ENCODE measurements at regions of chr14 and their contacts with region 1.

Region 1: DNA sequence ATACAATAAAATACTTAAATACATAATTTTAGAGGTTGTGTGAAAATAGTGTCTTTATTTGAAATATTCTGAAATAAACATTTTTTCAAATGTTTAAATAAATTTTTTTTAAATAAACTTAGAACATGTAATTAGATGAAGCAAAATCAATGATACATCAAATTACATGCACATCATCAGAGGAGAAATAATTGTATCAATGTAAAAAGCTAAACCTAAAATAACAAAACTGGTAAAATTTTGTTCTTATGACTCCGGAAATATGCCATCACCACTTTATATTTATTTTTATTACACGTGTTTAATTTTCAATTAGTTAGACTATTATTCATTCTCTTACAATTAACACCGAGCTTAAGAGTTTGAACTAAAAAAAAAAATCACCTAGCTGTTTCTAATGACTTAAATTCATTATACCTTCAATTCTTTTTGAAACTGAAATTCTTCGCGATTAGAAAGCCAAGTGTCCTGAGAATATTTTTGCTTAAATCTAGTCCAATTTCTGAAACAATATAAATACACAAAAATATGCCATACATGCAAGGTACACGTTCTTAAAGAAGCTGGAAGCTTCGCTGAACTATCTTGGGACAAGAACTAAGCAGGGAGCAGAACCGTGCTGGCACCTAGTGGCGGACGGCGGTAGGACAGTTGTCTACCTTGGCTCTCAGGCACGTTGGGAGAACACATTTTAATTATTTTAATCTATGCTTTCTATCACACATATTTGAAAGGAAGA is 230.5 kb downstream of the SLC25A21 start:
- DNase-seq: no peak
- ATAC-seq: peak; percentile 85
- H3K4me3 ChIP-seq: no peak overlapping the region
- H3K27ac ChIP-seq: no peak overlapping the region
- H3K4me1 ChIP-seq: no peaks in the 10 kb centered on the region
- H3K27me3 ChIP-seq: no peaks in the 10 kb centered on the region
- CTCF ChIP-seq: peak; percentile 91 to 98 (median 95)
- EP300 ChIP-seq: no peak
- POLR2A ChIP-seq: no peak
- RAD21 ChIP-seq: peak; percentile 95

Region 2: GRCh38 chr14:36070031-36070719 is 871.8 kb before region 1 on chr14:
- CTCF ChIA-PET with region 1: interaction called, 11 read pairs
- POLR2A ChIA-PET with region 1: no interaction called
- RAD21 ChIA-PET with region 1: interaction called, 5 read pairs
- SMC1A ChIA-PET with region 1: interaction called, 8 read pairs
- in situ Hi-C with region 1: no loop called
- intact Hi-C with region 1: no loop called
- DNase-seq: no peak
- ATAC-seq: peak; percentile 92
- H3K4me3 ChIP-seq: no peak overlapping the region
- H3K27ac ChIP-seq: no peak overlapping the region
- H3K4me1 ChIP-seq: no peaks in the 10 kb centered on the region
- H3K27me3 ChIP-seq: no peaks in the 10 kb centered on the region
- CTCF ChIP-seq: peak; percentile 72 to 88 (median 80)
- EP300 ChIP-seq: no peak
- POLR2A ChIP-seq: no peak
- RAD21 ChIP-seq: peak; percentile 88

Region 3: DNA sequence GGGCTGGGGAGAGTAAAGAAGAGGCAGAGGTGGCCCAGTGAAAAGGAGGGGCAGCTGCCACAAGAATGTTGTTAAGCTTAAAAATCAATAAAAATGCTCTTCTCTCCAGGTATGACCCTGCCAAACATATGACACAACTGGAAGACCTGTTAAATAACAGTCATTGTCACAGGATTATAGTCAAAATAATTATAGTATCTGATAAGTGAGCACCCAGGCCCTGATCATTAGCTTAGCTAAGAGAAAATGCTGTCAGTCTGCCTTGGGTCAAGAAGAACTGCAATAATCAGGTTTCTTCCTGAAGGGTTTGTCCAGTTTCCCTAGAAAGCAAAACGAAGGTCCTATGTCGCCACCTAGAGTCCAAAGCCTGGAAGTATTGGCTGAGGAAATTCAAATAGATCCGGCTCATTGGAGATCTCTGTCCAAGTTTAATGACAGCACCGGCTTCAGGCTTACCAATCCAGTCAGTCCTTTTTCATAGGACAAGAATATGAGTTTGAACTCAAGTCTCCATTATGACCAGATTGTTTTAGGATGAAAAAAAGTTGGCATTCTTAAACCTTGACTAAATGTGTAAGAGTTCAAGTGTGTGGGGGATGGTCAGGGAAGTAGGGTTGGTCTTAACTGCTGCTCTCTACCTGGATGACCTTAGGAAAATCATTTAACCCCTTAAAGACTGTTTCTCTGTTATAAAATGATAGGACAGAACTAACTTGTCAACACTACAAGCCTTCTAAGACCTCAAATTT is 337.0 kb before region 1 on chr14:
- CTCF ChIA-PET with region 1: interaction called, 13 read pairs
- POLR2A ChIA-PET with region 1: no interaction called
- RAD21 ChIA-PET with region 1: interaction called, 7 read pairs
- SMC1A ChIA-PET with region 1: interaction called, 4 read pairs
- in situ Hi-C with region 1: no loop called
- intact Hi-C with region 1: loop called (anchors 1 kb)
- DNase-seq: no peak
- ATAC-seq: peak; percentile 82
- H3K4me3 ChIP-seq: no peak overlapping the region
- H3K27ac ChIP-seq: no peak overlapping the region
- H3K4me1 ChIP-seq: no peaks in the 10 kb centered on the region
- H3K27me3 ChIP-seq: no peaks in the 10 kb centered on the region
- CTCF ChIP-seq: peak; percentile 80 to 82 (median 80)
- EP300 ChIP-seq: no peak
- POLR2A ChIP-seq: no peak
- RAD21 ChIP-seq: peak; percentile 86

Region 4: DNA sequence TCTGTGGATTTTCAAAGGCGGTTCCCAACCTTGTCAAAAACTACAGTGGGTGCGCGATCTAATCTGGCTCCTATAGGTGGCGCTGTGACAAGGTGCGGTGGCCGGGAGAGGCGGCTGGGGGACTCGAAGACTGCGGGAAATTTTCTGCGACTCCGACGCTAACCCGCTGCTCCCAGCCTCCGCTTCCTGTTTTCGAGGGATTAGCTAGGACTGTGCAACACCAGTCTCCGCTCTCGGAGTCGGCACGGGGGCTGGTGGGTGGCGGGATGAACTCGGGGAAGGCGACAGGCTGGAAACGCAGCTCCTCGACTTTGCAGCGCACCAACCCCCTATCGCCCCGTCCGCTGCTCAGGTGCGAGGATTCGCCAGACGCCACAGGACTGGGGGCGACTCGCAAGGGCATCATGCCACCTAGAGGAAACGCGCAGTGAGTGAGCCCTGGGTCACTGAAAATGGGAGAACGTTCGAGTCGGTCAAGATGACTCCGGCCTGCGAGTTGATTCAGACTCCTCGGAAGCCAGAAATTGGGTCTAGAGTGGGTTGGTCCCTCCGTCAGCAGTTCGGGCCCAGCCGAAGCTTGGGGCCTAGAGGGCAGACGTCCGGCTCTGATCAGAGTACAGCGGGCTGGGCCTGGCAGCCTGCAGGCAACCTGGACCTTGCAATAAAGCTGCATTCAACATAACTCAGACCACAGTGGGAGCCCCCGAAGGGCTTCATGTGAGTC is 285.8 kb before region 1 on chr14:
- CTCF ChIA-PET with region 1: interaction called, 29 read pairs
- POLR2A ChIA-PET with region 1: no interaction called
- RAD21 ChIA-PET with region 1: interaction called, 13 read pairs
- SMC1A ChIA-PET with region 1: interaction called, 9 read pairs
- in situ Hi-C with region 1: loop called (anchors 10 kb)
- intact Hi-C with region 1: loop called (anchors 2 kb)
- DNase-seq: no peak
- ATAC-seq: peak; percentile 68
- H3K4me3 ChIP-seq: no peak overlapping the region
- H3K27ac ChIP-seq: no peak overlapping the region
- H3K4me1 ChIP-seq: no peaks in the 10 kb centered on the region
- H3K27me3 ChIP-seq: peaks cover 5 to 13% of the 10 kb centered on the region in 2 experiments; a peak in 3 of 4 replicates
- CTCF ChIP-seq: peak; percentile 17 to 38 (median 25); a peak in 1 of 6 replicates
- EP300 ChIP-seq: no peak
- POLR2A ChIP-seq: no peak
- RAD21 ChIP-seq: no peak

Region 5: DNA sequence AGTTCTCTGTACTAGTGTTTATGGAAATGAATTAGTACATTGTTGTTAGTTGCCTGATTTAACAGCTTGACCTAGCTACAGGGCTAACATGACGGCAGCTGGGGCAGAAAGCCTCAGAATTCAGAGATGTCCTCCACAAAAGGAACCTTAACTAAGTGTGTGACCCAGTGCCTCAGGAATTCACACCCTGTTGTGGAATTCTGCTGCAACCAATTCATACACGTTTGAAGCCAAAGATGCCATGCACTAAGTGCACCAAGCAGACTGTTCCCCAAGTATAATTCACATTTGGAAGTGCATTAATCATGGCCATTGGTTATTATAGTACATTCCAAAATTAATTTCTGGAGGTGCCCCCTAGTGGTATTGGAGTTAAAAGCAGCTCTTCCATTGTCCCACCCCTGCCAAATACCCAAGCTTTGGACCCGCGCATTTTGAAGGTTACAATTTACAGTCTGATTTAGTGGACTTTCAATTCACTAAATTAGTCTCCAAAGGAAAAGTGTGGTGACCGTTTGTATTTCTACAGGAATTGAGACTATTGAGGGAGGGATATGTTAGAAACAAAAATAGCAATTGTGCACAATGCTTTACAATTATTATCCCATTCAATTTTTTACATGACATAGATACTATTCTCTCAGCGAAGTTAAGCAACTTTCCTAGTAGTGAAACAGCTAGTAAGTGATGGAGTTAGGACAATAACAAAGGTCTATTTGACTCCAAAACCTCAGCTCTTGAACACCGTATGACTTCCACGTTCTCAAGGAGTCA is 194.4 kb before region 1 on chr14:
- CTCF ChIA-PET with region 1: interaction called, 14 read pairs
- POLR2A ChIA-PET with region 1: no interaction called
- RAD21 ChIA-PET with region 1: interaction called, 14 read pairs
- SMC1A ChIA-PET with region 1: interaction called, 6 read pairs
- in situ Hi-C with region 1: no loop called
- intact Hi-C with region 1: no loop called
- DNase-seq: no peak
- ATAC-seq: no peak
- H3K4me3 ChIP-seq: no peak overlapping the region
- H3K27ac ChIP-seq: no peak overlapping the region
- H3K4me1 ChIP-seq: no peaks in the 10 kb centered on the region
- H3K27me3 ChIP-seq: no peaks in the 10 kb centered on the region
- CTCF ChIP-seq: peak; percentile 28 to 48 (median 32); a peak in 4 of 6 replicates
- EP300 ChIP-seq: no peak
- POLR2A ChIP-seq: no peak
- RAD21 ChIP-seq: no peak

Region 6: GRCh38 chr14:36866867-36867266 is 75.1 kb before region 1 on chr14:
- CTCF ChIA-PET with region 1: interaction called, 10 read pairs
- POLR2A ChIA-PET with region 1: no interaction called
- RAD21 ChIA-PET with region 1: interaction called, 4 read pairs
- SMC1A ChIA-PET with region 1: interaction called, 4 read pairs
- in situ Hi-C with region 1: no loop called
- intact Hi-C with region 1: no loop called
- DNase-seq: peak; percentile 38
- ATAC-seq: peak; percentile 91
- H3K4me3 ChIP-seq: no peak overlapping the region
- H3K27ac ChIP-seq: no peak overlapping the region; the same call in 1 of the 2 replicates
- H3K4me1 ChIP-seq: peaks cover 11% of the 10 kb centered on the region
- H3K27me3 ChIP-seq: no peaks in the 10 kb centered on the region
- CTCF ChIP-seq: no peak
- EP300 ChIP-seq: peak in 1 of 2 experiments; percentile 57; a peak in 2 of 4 replicates
- POLR2A ChIP-seq: no peak
- RAD21 ChIP-seq: no peak

Region 7: DNA sequence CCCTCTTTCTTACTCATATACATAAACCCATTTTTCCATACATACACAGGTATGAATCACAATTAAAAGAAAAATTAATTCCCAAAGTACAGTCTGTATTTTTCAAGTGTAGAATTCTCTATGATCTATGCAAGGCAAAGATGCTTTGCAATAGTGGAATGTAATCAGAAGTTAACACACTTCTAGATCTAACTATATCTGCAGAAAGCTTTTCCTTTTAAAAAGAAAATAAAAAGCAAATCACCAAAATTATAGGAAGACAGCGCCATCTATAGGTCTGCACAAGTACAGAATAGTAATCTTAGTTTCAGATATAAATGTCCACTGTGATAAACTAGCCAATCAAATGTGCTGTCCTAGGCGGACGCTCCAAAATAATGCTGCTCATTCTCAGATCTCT is 208.5 kb after region 1 on chr14:
- CTCF ChIA-PET with region 1: interaction called, 10 read pairs
- POLR2A ChIA-PET with region 1: no interaction called
- RAD21 ChIA-PET with region 1: interaction called, 6 read pairs
- SMC1A ChIA-PET with region 1: interaction called, 3 read pairs
- in situ Hi-C with region 1: no loop called
- intact Hi-C with region 1: no loop called
- DNase-seq: no peak
- ATAC-seq: peak; percentile 57
- H3K4me3 ChIP-seq: no peak overlapping the region
- H3K27ac ChIP-seq: no peak overlapping the region
- H3K4me1 ChIP-seq: no peaks in the 10 kb centered on the region
- H3K27me3 ChIP-seq: no peaks in the 10 kb centered on the region
- CTCF ChIP-seq: peak; percentile 32 to 45 (median 41); a peak in 4 of 6 replicates
- EP300 ChIP-seq: no peak
- POLR2A ChIP-seq: no peak
- RAD21 ChIP-seq: peak; percentile 49

Region 8: DNA sequence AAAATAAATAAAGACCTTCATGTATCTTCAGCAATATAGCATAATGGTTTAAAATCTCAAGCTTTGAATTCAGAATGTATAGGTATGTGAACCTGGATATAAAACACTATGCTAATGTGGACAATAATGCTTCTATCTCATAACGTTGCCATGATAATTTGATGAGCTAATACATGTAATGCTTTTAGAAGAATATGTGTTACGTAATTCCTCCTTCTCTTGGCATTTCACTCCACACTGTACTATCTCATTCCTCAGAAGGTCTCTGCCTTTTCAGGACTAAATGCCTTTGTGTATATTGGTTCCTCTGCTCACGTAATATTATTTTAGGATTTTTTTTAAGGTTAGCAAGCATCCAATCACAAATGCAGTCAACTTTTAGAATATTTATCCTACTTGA is 566.5 kb after region 1 on chr14:
- CTCF ChIA-PET with region 1: no interaction called
- POLR2A ChIA-PET with region 1: no interaction called
- RAD21 ChIA-PET with region 1: no interaction called
- SMC1A ChIA-PET with region 1: no interaction called
- in situ Hi-C with region 1: no loop called
- intact Hi-C with region 1: no loop called
- DNase-seq: no peak
- ATAC-seq: no peak
- H3K4me3 ChIP-seq: no peak overlapping the region
- H3K27ac ChIP-seq: no peak overlapping the region
- H3K4me1 ChIP-seq: no peaks in the 10 kb centered on the region
- H3K27me3 ChIP-seq: no peaks in the 10 kb centered on the region
- CTCF ChIP-seq: no peak
- EP300 ChIP-seq: no peak
- POLR2A ChIP-seq: no peak
- RAD21 ChIP-seq: no peak

Measured in GM12878 (cell line).